ENCODE measurements at regions of chr2 and their contacts with region 1.

Region 1: DNA sequence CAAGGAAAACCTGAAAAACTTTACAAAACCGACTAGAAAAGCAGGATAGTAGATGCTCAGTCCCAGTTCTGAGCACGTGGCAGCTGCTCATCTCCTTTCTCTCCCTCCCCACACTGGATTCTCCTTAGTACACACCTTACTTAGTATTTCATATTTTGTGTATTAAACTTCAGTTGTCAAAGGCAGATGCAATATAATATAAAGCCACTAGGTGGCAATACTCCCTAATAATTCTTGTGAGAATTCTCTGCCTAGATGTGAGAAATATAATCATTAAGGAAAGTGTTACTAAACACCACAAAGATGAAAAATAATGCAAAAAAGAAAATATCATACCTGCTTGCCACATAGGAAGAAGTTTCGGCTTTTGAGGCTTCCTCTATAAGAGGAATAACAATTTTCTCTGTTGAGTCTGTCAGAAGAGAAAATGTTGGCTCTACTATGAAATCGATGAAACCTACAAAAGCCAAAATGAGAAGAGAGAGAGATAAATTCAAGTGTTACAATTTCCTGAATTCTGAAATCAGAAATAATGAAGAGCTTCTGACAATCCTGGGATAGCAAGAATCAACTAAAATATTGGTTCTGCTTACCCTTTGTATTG is 200.6 kb downstream of the PPP1R1C start:
- DNase-seq: no peak
- H3K4me3 ChIP-seq: no peak overlapping the region
- CTCF ChIP-seq: peak in 1 of 3 donors; percentile 43
- POLR2A ChIP-seq: no peak

Region 2: DNA sequence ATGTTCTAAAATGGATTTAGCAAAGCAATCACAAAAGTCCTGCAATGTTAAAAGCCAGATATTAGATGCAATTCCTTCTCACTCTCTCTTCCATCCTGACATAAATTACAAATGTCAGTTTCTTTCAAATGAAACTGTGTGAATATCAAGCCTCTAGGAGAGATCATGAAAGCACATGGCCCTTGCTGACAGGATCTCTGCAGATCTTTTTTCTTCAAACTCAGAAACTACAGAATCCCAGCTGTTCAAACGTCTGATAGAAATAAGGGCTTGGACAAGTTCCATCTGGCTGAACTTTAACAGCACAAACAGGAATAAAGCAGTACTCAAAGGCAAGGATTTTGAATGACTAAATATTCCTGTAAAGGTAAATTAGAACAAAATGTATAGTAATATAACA is 193.0 kb after region 1 on chr2:
- intact Hi-C with region 1: no loop called
- DNase-seq: no peak
- H3K4me3 ChIP-seq: no peak overlapping the region
- CTCF ChIP-seq: no peak
- POLR2A ChIP-seq: no peak

Region 3: GRCh38 chr2:182650704-182651103 is 464.5 kb after region 1 on chr2:
- intact Hi-C with region 1: loop called (anchors 10 kb)
- DNase-seq: no peak
- H3K4me3 ChIP-seq: no peak overlapping the region
- CTCF ChIP-seq: no peak
- POLR2A ChIP-seq: no peak